Activated naive CD4-positive, alpha-beta T cell treated with anti-CD3 and anti-CD28 coated beads for 36 hours (primary cell): ENCODE measurements at regions of chr2 and their contacts with region 1.

Region 1: GRCh38 chr2:54606393-54606969 is 117.0 kb upstream of the EML6 start:
- DNase-seq: peak; percentile 79
- H3K4me3 Mint-ChIP-seq: peak overlapping the region; percentile 53
- H3K27ac Mint-ChIP-seq: peak overlapping the region; percentile 80
- H3K4me1 Mint-ChIP-seq: peaks cover 84% of the 10 kb centered on the region
- H3K27me3 Mint-ChIP-seq: no peaks in the 10 kb centered on the region

Region 2: DNA sequence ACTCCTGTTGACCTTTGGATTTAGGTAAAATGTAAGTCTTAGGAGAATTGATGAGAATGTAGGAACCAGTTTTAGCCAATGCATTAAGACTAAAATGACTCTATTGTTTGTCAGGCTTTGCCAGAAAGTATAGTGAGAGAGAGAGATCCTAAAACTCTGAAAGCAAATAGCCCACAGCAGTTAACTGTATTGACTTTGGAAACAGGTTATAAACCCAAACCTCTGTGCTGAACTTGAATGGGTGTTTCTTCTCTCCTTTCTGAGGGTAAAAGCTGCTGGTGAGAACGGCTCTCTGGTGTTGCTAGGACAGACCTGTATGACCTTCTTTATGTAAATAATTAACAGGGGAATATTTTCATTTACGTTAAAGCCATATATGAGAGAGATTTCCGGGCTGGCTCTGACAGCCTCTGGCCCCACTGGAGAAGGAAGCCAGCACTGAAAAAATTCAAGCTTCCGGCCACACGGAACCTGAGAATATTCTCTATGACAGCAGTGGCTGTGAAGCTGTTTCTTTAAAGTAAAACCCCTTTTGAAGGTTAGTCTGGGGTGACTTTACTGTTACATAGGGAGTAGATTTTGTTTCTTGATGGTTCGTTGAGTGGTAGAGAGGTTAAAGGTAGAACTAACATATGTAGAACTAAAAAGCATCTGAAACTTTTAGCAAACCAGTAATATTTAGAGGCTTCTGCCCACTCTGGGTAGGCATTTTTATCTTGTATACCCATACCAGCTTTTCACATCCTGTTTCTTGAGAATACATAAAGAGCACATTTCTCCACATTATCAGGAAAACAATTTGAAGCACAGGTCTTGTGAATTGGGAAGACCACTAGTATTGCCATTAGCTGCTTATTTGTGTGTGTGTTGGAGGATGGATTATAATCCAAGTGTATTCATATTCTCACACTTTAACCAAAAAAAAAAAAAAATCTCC is 26.5 kb before region 1 on chr2:
- CTCF ChIA-PET with region 1: interaction called, 11 read pairs
- intact Hi-C with region 1: no loop called
- DNase-seq: peak; percentile 54
- H3K4me3 Mint-ChIP-seq: peak overlapping the region; percentile 67
- H3K27ac Mint-ChIP-seq: peak overlapping the region; percentile 87
- H3K4me1 Mint-ChIP-seq: peaks cover 93% of the 10 kb centered on the region
- H3K27me3 Mint-ChIP-seq: no peaks in the 10 kb centered on the region

Region 3: GRCh38 chr2:54589340-54590215 is 16.9 kb before region 1 on chr2:
- CTCF ChIA-PET with region 1: interaction called, 7 read pairs
- intact Hi-C with region 1: loop called (anchors 1 kb)
- DNase-seq: peak; percentile 76
- H3K4me3 Mint-ChIP-seq: peak overlapping the region; percentile 27
- H3K27ac Mint-ChIP-seq: peak overlapping the region; percentile 90
- H3K4me1 Mint-ChIP-seq: peaks cover 85% of the 10 kb centered on the region
- H3K27me3 Mint-ChIP-seq: no peaks in the 10 kb centered on the region

Region 4: GRCh38 chr2:54624591-54625071 is 18.1 kb after region 1 on chr2:
- CTCF ChIA-PET with region 1: interaction called, 11 read pairs
- intact Hi-C with region 1: loop called (anchors 2 kb)
- DNase-seq: no peak
- H3K4me3 Mint-ChIP-seq: no peak overlapping the region
- H3K27ac Mint-ChIP-seq: peak overlapping the region; percentile 15
- H3K4me1 Mint-ChIP-seq: peaks cover 5% of the 10 kb centered on the region
- H3K27me3 Mint-ChIP-seq: no peaks in the 10 kb centered on the region

Region 5: DNA sequence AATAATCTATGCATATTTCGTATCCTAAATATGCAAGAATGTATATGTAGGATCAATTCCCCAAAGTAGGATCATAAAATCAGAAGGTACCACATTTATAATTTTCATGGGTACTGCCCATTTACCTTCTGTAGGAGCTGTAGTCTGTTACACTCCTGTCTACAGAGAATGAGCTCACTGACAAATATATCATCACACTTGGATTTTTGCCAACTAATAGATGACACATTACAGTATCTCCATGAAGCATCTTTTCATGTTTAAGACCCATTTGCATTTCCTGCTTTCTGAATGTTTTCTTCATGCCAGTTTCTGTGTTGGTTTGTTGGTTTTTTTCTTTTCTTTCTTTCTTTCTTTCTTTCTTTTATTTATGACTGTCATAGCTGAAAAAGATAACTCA is 46.1 kb after region 1 on chr2:
- CTCF ChIA-PET with region 1: no interaction called
- intact Hi-C with region 1: no loop called
- DNase-seq: no peak
- H3K4me3 Mint-ChIP-seq: no peak overlapping the region
- H3K27ac Mint-ChIP-seq: no peak overlapping the region
- H3K4me1 Mint-ChIP-seq: peaks cover 11% of the 10 kb centered on the region
- H3K27me3 Mint-ChIP-seq: no peaks in the 10 kb centered on the region